ENCODE measurements at regions of chr6 and their contacts with region 1.

Region 1: GRCh38 chr6:160667639-160668481 is 3.8 kb upstream of the LPA start:
- DNase-seq: peak; percentile 39
- CTCF ChIP-seq: peak; percentile 75

Region 2: DNA sequence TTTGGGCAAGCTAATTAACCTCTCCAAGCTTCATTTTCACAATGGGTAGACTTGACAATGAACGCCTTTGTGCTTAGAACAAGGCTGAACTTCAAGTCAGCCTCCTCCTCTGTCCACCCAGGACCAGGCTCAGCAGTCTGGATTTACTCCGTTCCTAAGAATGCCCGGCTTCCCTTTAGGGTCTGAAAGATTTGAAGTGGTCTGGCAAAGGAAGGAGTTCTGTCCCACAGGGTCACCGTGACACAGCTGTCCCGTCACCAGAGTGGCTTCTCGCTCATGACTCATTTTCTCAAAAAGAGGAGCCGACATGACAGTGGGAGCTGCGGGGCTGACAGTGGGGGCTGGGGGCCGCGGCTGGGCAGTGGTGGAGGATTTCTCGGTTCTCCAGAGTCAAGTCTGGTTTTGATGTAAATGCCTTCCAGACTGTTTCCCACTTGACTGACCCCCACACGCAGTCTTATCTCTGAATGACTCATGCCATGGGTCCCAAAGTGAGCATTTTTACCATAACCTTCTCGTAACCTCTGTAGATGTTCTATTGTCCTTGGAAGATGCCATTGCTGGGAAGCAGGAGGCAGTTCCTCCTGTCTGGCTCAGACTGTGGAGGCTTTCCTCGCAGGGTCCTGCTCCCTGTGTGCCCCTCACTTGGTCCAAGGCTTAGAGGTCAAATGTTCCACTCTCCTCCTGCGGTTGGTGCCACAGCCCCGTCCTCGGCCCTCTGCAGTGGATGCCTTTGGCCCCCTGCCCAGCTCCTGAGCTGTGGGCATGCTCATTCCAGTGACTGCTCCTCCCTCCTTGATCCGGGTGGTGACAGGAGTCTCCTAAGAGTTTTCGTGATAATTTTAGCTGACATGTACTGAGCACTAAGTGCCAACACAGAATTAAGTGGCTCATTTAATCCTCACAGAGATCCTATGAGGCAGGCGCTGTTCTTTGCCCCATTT is 1245.5 kb before region 1 on chr6:
- in situ Hi-C with region 1: no loop called
- DNase-seq: no peak
- CTCF ChIP-seq: no peak

Region 3: DNA sequence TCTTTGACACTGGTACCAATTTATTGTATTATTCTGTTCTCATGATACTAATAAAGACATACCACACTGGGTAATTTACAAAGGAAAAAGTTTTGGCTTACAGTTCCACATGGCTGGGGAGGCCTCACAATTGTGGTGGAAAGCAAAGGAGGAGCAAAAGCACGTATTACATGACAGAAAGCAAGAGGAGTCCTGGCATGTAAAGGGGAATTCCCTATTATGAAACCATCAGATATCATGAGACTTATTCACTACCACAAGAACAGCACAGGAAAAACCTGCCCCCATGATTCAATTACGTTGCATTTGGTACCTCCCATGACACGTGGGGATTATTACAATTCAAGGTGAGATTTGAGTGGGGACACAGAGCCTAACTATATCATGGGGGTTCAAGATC is 452.6 kb before region 1 on chr6:
- in situ Hi-C with region 1: no loop called
- DNase-seq: no peak
- CTCF ChIP-seq: no peak

Region 4: GRCh38 chr6:160520043-160520904 is 147.6 kb before region 1 on chr6:
- in situ Hi-C with region 1: loop called (anchors 25 kb)
- DNase-seq: peak; percentile 14
- CTCF ChIP-seq: no peak